ENCODE measurements at regions of chr1 and their contacts with region 1.

Region 1: DNA sequence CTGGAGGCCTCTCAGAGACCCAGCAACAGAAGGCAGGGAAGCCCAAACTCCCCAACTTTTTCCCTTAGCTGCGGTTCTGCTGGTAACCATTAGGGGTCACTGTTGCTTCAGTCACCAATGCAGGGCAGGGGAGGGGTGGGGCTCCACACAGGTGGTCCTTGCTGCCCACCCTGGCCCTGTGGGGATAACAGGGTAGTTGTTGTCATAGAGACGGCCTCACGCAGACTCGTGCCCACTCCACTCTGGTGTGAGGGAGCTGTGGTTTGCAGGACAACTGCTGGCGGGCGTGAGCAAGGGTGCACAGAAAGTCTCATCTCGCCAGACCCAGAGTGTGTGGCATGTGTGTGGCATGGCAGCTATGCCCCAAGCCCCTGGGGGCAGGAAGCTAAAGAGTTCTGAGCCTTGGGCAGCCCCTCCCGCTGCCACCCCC is 19.9 kb downstream of the INSRR start:
- DNase-seq: peak; percentile 64

Region 2: GRCh38 chr1:156869455-156869854 is 30.5 kb after region 1 on chr1:
- intact Hi-C with region 1: loop called in 1 of 2 experiments (anchors 1 kb)
- DNase-seq: no peak

Measured in posterior vena cava (tissue), 2 donors.